CD8-positive, alpha-beta T cell (primary cell): ENCODE measurements at regions of chr13 and their contacts with region 1.

Region 1: GRCh38 chr13:20828539-20829364 is 55.0 kb upstream of the EEF1AKMT1 start:
- DNase-seq: peak in 6 of 9 experiments; percentile 5 to 81 (median 36)
- ATAC-seq: peak; percentile 94
- H3K4me3 ChIP-seq: peak overlapping the region in 1 of 2 experiments; percentile 10
- H3K4me3 Mint-ChIP-seq: peak overlapping the region; percentile 44
- H3K27ac ChIP-seq: no peak overlapping the region
- H3K27ac Mint-ChIP-seq: peak overlapping the region; percentile 70
- H3K4me1 ChIP-seq: no peaks in the 10 kb centered on the region
- H3K4me1 Mint-ChIP-seq: peaks cover 7% of the 10 kb centered on the region
- H3K27me3 ChIP-seq: no peaks in the 10 kb centered on the region
- H3K27me3 Mint-ChIP-seq: no peaks in the 10 kb centered on the region
- CTCF ChIP-seq: peak; percentile 71

Region 2: DNA sequence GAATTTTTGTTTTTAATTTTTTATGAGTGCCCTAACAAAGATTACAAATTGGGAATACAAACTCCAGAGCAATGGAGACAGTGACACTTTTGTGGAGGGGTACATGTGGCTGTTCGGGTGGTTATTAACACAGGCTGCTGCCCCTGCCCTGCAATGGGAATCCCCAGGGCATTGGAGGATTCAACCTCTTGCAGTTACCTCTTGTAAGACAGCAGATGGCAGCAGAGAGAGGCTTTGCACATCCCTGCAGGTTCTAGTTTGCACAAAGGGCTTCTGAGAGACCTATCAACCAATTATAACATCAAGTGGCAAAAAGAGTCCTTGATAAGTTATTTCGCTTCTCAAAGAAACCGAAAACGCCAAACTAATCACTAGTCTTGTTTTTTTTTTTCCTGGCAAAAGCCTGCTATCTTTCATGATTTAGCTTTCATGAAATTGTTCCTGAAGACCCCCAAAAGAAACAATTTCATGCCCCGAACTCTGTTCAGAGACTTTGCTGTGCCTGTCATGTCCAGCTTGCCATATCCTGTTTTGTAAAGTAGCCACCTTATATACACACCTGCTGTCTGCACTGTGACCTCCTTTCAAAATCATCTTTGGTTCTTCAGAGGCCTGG is 646.4 kb before region 1 on chr13:
- CTCF ChIA-PET with region 1: interaction called, 4 read pairs
- POLR2A ChIA-PET with region 1: no interaction called
- intact Hi-C with region 1: loop called (anchors 2 to 5 kb)
- DNase-seq: peak in 8 of 9 experiments; percentile 12 to 84 (median 54)
- ATAC-seq: peak; percentile 100
- H3K4me3 ChIP-seq: no peak overlapping the region
- H3K4me3 Mint-ChIP-seq: no peak overlapping the region
- H3K27ac ChIP-seq: no peak overlapping the region
- H3K27ac Mint-ChIP-seq: no peak overlapping the region
- H3K4me1 ChIP-seq: no peaks in the 10 kb centered on the region
- H3K4me1 Mint-ChIP-seq: peaks cover 3% of the 10 kb centered on the region
- H3K27me3 ChIP-seq: no peaks in the 10 kb centered on the region
- H3K27me3 Mint-ChIP-seq: peaks cover 42% of the 10 kb centered on the region
- CTCF ChIP-seq: peak; percentile 62

Region 3: DNA sequence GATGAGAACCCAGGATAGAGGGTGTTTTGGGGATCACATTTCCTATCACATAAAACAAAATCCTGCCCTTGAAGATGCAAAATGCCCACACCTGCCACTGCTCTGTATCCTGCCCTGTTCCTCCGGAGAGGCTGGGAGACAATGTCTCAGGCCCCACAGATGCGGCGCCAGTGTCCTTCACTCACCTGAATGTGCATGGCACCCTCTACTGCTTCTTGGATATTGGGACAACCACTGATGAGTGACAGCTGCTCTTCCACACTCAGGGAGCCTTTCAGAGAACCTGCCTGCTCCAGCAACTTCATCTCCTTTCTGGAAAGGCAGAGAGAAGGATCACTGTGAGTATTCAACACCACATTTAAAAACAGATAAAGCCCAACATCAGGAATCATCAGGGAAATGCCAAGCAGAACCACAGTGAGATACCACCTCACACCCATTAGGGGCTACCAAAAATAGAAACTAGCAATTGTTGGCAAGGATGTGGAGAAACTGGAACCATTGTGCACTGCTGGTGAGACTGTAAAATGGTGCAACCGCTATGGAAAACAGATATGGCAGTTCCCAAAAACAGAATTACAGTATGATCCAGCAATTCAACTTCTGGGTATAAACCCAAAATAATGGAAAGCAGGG is 339.4 kb before region 1 on chr13:
- CTCF ChIA-PET with region 1: interaction called, 84 read pairs
- POLR2A ChIA-PET with region 1: no interaction called
- intact Hi-C with region 1: no loop called
- DNase-seq: peak in 4 of 9 experiments; percentile 30 to 72 (median 44)
- ATAC-seq: no peak
- H3K4me3 ChIP-seq: no peak overlapping the region
- H3K4me3 Mint-ChIP-seq: no peak overlapping the region
- H3K27ac ChIP-seq: no peak overlapping the region
- H3K27ac Mint-ChIP-seq: no peak overlapping the region
- H3K4me1 ChIP-seq: no peaks in the 10 kb centered on the region
- H3K4me1 Mint-ChIP-seq: peaks cover 12% of the 10 kb centered on the region
- H3K27me3 ChIP-seq: no peaks in the 10 kb centered on the region
- H3K27me3 Mint-ChIP-seq: no peaks in the 10 kb centered on the region
- CTCF ChIP-seq: no peak

Region 4: DNA sequence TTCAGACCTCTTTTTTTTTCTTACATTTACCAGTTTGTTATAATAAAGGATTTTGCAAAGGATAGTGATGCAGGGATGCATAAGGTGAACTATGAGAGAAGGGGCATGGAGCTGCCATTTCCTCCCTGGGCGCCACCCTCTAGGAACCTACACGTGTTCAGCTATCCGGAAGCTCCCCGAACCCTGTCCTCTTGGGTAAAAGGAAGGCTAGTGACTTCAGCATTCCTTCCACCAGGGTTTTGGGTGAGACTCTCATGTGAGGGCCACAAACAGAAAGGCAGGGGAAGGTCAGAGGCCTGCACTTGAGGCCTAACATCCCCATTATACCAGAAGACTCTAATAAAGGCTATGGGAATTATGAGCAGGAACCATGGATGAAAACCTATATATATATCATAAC is 204.5 kb before region 1 on chr13:
- CTCF ChIA-PET with region 1: no interaction called
- POLR2A ChIA-PET with region 1: no interaction called
- intact Hi-C with region 1: no loop called
- DNase-seq: no peak
- ATAC-seq: no peak
- H3K4me3 ChIP-seq: no peak overlapping the region
- H3K4me3 Mint-ChIP-seq: no peak overlapping the region
- H3K27ac ChIP-seq: no peak overlapping the region
- H3K27ac Mint-ChIP-seq: no peak overlapping the region
- H3K4me1 ChIP-seq: no peaks in the 10 kb centered on the region
- H3K4me1 Mint-ChIP-seq: no peaks in the 10 kb centered on the region
- H3K27me3 ChIP-seq: no peaks in the 10 kb centered on the region
- H3K27me3 Mint-ChIP-seq: no peaks in the 10 kb centered on the region
- CTCF ChIP-seq: no peak

Region 5: DNA sequence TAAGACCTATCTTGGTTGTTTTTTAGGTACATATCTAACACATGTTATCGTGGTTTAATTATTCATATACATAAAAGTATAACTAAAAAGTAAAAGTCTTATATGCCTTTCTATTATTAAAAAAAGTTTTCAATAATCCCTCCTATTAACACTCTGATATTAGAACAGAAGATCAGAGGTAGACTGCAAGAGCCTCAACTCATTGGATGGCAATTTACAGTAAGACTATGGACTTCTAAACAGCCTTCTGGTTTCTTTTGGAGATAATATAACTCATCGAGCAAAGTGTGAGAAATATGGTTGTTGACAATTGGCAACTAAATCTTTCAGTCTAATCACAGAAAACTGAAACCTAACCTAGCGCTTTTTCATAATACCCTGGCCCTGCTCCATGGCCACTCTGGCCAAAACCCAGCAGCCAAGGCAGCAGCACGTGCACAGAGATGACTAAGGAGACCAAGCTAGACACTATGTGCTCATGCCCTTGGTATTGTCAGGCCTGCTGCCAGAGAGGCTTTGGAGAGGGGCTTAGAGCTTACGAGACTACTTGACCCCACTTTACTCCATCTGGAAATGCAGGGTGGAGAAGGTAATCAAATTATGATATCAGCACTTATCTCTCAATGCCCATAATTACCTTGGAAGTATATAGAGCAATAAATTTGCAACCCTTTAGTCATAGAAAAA is 14.4 kb before region 1 on chr13:
- CTCF ChIA-PET with region 1: interaction called, 42 read pairs
- POLR2A ChIA-PET with region 1: interaction called, 3 read pairs
- intact Hi-C with region 1: no loop called
- DNase-seq: no peak
- ATAC-seq: no peak
- H3K4me3 ChIP-seq: no peak overlapping the region
- H3K4me3 Mint-ChIP-seq: no peak overlapping the region
- H3K27ac ChIP-seq: no peak overlapping the region
- H3K27ac Mint-ChIP-seq: no peak overlapping the region
- H3K4me1 ChIP-seq: no peaks in the 10 kb centered on the region
- H3K4me1 Mint-ChIP-seq: no peaks in the 10 kb centered on the region
- H3K27me3 ChIP-seq: no peaks in the 10 kb centered on the region
- H3K27me3 Mint-ChIP-seq: no peaks in the 10 kb centered on the region
- CTCF ChIP-seq: no peak

Region 6: DNA sequence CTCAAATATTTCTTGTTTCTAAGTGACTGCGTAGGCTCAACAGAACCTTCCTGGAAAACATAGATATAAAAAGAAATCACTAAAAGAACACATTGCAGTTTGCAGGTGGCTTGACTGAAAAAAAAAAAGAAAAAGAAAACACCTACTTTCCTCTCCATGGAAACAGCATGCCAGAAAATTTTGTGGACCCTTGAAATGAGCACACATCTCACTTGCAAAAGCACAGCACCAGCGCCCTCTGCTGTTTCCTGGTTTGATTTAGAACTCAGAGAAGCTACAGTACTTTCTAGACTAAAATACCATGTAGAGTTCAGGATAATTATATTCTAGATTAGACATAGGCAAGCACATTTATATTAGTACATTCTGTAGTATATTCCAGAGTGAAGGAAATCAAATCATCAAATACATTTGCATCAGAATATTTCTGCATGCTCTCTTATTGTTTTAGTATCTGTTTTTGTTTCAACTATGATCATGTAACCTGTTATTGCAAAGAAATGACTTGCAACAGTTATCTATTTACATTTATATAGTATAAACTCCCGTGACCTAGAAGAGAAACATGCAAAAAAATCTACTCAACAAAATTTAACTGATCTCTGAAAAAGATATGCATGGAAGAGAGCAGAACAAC is 96.1 kb after region 1 on chr13:
- CTCF ChIA-PET with region 1: interaction called, 12 read pairs
- POLR2A ChIA-PET with region 1: no interaction called
- intact Hi-C with region 1: loop called in 1 of 2 experiments (anchors 10 kb)
- DNase-seq: peak; percentile 46 to 80 (median 78)
- ATAC-seq: peak; percentile 44
- H3K4me3 ChIP-seq: no peak overlapping the region
- H3K4me3 Mint-ChIP-seq: no peak overlapping the region
- H3K27ac ChIP-seq: no peak overlapping the region
- H3K27ac Mint-ChIP-seq: no peak overlapping the region
- H3K4me1 ChIP-seq: no peaks in the 10 kb centered on the region
- H3K4me1 Mint-ChIP-seq: no peaks in the 10 kb centered on the region
- H3K27me3 ChIP-seq: no peaks in the 10 kb centered on the region
- H3K27me3 Mint-ChIP-seq: peaks cover 2% of the 10 kb centered on the region
- CTCF ChIP-seq: peak; percentile 87